CD14-positive monocyte (primary cell): ENCODE measurements at regions of chr19 and their contacts with region 1.

Region 1: GRCh38 chr19:38374429-38375176 is at the start of gene PSMD8:
- DNase-seq: peak; percentile 100
- H3K4me3 ChIP-seq: peak within 1 kb of the TSS; percentile 62 to 95 (median 75)
- H3K4me3 Mint-ChIP-seq: peak within 1 kb of the TSS; percentile 99 to 100
- H3K27ac ChIP-seq: peak within 1 kb of the TSS; percentile 68 to 92
- H3K27ac Mint-ChIP-seq: peak within 1 kb of the TSS; percentile 97 to 99 (median 98)
- H3K4me1 ChIP-seq: peaks cover 18 to 23% of the 10 kb centered on the region in 2 donors
- H3K4me1 Mint-ChIP-seq: peaks cover 24% of the 10 kb centered on the region
- H3K27me3 ChIP-seq: no peaks in the 10 kb centered on the region
- H3K27me3 Mint-ChIP-seq: peaks cover 5 to 13% (median 8%) of the 10 kb centered on the region in 3 donors
- CTCF ChIP-seq: no peak
- polyA plus RNA-seq, gene PSMD8: 148 to 207 (median 179) TPM

Region 2: GRCh38 chr19:38229585-38230073 is 145.0 kb before region 1 on chr19:
- intact Hi-C with region 1: loop called in 1 of 2 experiments (anchors 5 kb)
- DNase-seq: peak; percentile 1 to 21 (median 9)
- H3K4me3 ChIP-seq: no peak overlapping the region
- H3K4me3 Mint-ChIP-seq: peak overlapping the region in 1 of 2 donors; percentile 69
- H3K27ac ChIP-seq: no peak overlapping the region
- H3K27ac Mint-ChIP-seq: no peak overlapping the region
- H3K4me1 ChIP-seq: peaks cover 6 to 9% of the 10 kb centered on the region in 2 donors
- H3K4me1 Mint-ChIP-seq: peaks cover 4% of the 10 kb centered on the region
- H3K27me3 ChIP-seq: peaks cover 42 to 69% of the 10 kb centered on the region in 2 donors
- H3K27me3 Mint-ChIP-seq: peaks cover 55 to 75% (median 64%) of the 10 kb centered on the region in 3 donors
- CTCF ChIP-seq: no peak

Region 3: DNA sequence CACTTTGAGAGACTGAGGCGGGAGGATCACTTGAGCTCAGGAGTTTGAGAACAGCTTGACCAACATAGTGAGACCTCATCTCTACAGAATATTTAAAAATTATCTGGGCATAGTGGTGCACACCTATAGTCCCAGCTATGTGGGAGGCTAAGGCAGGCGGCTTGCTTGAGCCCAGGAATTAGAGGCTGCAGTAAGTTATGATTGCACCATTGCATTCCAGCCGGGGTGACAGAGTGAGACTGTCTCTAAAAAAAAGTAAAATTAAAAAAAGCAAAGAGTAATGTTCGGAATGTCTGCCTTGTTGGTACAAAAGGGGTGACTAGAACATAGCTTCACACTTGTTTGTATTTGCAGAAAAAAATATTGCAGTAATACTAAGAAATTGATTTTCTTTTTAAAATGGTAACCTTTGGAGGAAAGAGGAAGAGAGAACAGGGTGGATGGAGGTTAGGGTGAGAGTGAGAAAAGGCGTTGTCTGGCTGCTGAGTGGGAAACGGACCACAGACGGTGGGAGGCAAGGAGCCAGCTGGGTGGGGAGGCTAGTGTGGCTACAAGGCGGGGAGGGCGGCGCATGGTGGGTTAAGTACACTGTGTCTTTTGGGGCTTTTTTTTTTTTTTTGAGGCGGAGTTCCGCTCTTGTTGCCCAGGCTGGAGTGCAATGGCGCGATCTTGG is 128.6 kb before region 1 on chr19:
- intact Hi-C with region 1: loop called in 1 of 2 experiments (anchors 2 kb)
- DNase-seq: no peak
- H3K4me3 ChIP-seq: no peak overlapping the region
- H3K4me3 Mint-ChIP-seq: no peak overlapping the region
- H3K27ac ChIP-seq: no peak overlapping the region
- H3K27ac Mint-ChIP-seq: no peak overlapping the region
- H3K4me1 ChIP-seq: no peaks in the 10 kb centered on the region
- H3K4me1 Mint-ChIP-seq: peaks cover 8% of the 10 kb centered on the region
- H3K27me3 ChIP-seq: no peaks in the 10 kb centered on the region
- H3K27me3 Mint-ChIP-seq: peaks cover 4 to 15% (median 5%) of the 10 kb centered on the region in 3 donors
- CTCF ChIP-seq: no peak

Region 4: GRCh38 chr19:38315657-38316476 is 58.7 kb before region 1 on chr19 and contains the start of gene YIF1B:
- intact Hi-C with region 1: loop called in 1 of 2 experiments (anchors 5 kb)
- DNase-seq: peak; percentile 94 to 97 (median 95)
- H3K4me3 ChIP-seq: peak within 1 kb of the TSS; percentile 44 to 85 (median 61)
- H3K4me3 Mint-ChIP-seq: peak within 1 kb of the TSS; percentile 77 to 91
- H3K27ac ChIP-seq: peak within 1 kb of the TSS; percentile 91 to 92
- H3K27ac Mint-ChIP-seq: peak within 1 kb of the TSS; percentile 92 to 98 (median 95)
- H3K4me1 ChIP-seq: peaks cover 69 to 85% of the 10 kb centered on the region in 2 donors
- H3K4me1 Mint-ChIP-seq: peaks cover 68% of the 10 kb centered on the region
- H3K27me3 ChIP-seq: no peaks in the 10 kb centered on the region
- H3K27me3 Mint-ChIP-seq: peaks cover 2 to 4% (median 3%) of the 10 kb centered on the region in 3 donors
- CTCF ChIP-seq: no peak
- polyA plus RNA-seq, gene YIF1B: 79.4 to 90.5 (median 86.1) TPM